ENCODE measurements at regions of chr11 and their contacts with region 1.

Region 1: DNA sequence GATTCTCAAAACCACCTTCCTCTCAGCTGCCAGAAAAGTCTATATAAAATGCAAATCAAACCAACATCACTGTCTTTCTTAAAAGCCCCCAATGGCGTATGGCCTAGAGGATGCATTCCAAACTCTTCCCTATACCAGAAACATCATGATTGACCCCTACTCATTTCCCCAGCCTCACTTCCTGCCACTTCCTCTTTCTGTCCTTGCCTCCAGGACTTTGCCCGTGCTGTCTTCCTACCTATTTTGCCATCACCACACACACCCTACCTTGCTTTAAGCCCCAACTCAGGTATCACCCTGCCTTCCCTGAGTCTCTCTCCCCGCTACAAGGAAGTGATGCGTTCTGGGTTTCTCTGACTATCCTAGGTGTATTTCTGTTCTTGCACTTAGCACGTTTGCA is 8.1 kb downstream of the POU2AF2 start:
- DNase-seq: no peak
- ATAC-seq: no peak
- H3K4me3 ChIP-seq: no peak overlapping the region
- H3K27ac ChIP-seq: no peak overlapping the region
- H3K4me1 ChIP-seq: no peaks in the 10 kb centered on the region
- H3K27me3 ChIP-seq: peaks cover 1 to 5% (median 3%) of the 10 kb centered on the region in 3 donors
- CTCF ChIP-seq: no peak

Region 2: GRCh38 chr11:111189466-111189865 is 64.2 kb before region 1 on chr11:
- intact Hi-C with region 1: loop called in 1 of 2 experiments (anchors 2 kb)
- DNase-seq: no peak
- ATAC-seq: no peak
- H3K4me3 ChIP-seq: no peak overlapping the region
- H3K27ac ChIP-seq: no peak overlapping the region
- H3K4me1 ChIP-seq: no peaks in the 10 kb centered on the region
- H3K27me3 ChIP-seq: no peaks in the 10 kb centered on the region
- CTCF ChIP-seq: no peak

Region 3: GRCh38 chr11:111299101-111300026 is 45.7 kb after region 1 on chr11:
- intact Hi-C with region 1: no loop called
- DNase-seq: peak; percentile 73 to 86
- ATAC-seq: peak; percentile 83 to 96 (median 92)
- H3K4me3 ChIP-seq: peak overlapping the region; percentile 82
- H3K27ac ChIP-seq: peak overlapping the region; percentile 47
- H3K4me1 ChIP-seq: peaks cover 3% of the 10 kb centered on the region
- H3K27me3 ChIP-seq: no peaks in the 10 kb centered on the region
- CTCF ChIP-seq: peak; percentile 62

Measured in psoas muscle (tissue), 8 donors.